ENCODE measurements at regions of chr1 and their contacts with region 1.

Region 1: DNA sequence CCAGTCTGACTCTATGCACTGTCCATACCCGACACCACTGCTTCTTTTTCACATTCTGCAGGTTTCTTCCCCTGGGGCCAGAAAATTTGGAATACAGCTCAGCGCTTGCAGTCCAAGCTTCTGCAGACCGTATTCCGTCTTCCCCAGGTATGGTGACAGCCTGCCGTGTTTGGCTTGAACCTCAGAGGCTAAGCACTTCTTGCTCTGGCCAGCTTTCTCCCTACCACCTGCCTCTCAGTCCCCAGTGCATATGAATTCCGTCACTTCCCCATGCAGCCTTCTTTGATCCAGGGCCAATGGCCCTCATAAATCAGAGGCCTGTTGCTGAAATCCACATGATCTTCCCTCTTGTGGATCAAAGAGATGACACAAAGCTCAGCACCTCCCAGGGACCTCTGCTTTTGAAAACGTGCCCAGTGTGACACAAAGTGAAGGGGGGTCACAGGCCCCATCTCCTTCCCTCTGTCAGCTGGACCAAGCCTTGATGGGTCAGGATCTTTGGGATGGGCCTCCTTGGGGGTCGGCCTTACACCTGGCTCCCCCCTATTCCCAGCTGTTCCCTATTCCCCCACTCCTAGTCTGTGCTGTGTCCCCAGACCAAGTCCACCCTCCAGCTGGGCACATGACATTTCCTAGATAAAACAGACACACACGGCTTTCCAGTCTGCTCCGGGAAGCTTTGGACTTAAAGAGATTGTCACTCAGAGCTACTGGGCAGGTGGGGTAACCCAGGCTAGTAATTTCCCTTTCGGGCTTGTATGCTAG is 66.6 kb downstream of the HMGB4 start:
- DNase-seq: no peak
- ATAC-seq: no peak
- H3K4me3 ChIP-seq: no peak overlapping the region
- H3K27ac ChIP-seq: no peak overlapping the region
- H3K4me1 ChIP-seq: no peaks in the 10 kb centered on the region
- H3K27me3 ChIP-seq: no peaks in the 10 kb centered on the region; the same call in none of the 2 replicates
- CTCF ChIP-seq: no peak

Region 2: DNA sequence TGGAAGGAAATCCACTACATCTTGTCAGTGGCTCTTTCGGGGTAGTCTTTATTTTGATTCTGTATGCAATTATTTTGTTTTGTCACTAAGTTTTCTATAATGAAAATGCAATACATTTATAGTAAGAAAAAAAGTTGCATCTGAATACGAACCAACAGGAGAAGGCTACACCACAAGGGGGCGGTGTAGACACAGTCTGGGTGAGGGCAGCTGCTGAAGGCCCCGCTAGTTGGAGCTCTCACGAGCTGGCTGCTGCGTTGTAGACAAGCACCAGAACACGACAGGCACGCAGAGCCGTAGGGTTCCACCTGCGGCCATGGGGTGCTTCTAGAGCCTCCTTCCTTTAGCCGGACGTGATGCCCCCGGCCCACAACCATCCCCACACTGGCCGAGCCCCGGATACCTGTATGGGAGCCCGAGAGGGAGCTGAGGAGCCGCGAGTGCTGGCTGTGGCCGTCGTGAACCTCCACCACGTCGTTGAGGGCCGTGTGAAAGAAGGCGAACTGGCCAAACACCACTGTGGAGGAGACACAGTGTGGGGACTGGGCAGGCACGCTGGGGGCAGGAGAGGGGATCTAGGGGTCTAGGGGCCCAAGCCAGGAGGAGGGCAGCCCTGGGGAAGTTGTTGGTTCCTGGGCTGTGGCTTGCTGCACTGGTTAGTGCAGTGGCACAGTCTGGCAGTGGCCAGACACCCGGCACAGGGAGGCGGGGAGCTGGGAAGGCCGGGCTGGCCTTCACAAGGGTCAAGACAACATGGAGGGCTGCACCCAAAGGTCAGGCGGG is 297.3 kb before region 1 on chr1:
- CTCF ChIA-PET with region 1: interaction called, 16 read pairs
- POLR2A ChIA-PET with region 1: no interaction called
- in situ Hi-C with region 1: no loop called
- intact Hi-C with region 1: no loop called
- DNase-seq: peak; percentile 77
- ATAC-seq: peak; percentile 96
- H3K4me3 ChIP-seq: peak overlapping the region in 1 of 2 experiments; percentile 23; a peak in 1 of 4 replicates
- H3K27ac ChIP-seq: no peak overlapping the region
- H3K4me1 ChIP-seq: no peaks in the 10 kb centered on the region
- H3K27me3 ChIP-seq: peaks cover 12% of the 10 kb centered on the region
- CTCF ChIP-seq: peak; percentile 99

Region 3: GRCh38 chr1:34009340-34009985 is 78.9 kb after region 1 on chr1:
- CTCF ChIA-PET with region 1: no interaction called
- POLR2A ChIA-PET with region 1: no interaction called
- in situ Hi-C with region 1: no loop called
- intact Hi-C with region 1: no loop called
- DNase-seq: no peak
- ATAC-seq: no peak
- H3K4me3 ChIP-seq: no peak overlapping the region
- H3K27ac ChIP-seq: no peak overlapping the region
- H3K4me1 ChIP-seq: no peaks in the 10 kb centered on the region
- H3K27me3 ChIP-seq: no peaks in the 10 kb centered on the region
- CTCF ChIP-seq: no peak